ENCODE measurements at regions of chr17 and their contacts with region 1.

Region 1: GRCh38 chr17:29740017-29740416 is 117.3 kb upstream of the CORO6 start:
- DNase-seq: no peak
- ATAC-seq: no peak
- H3K4me3 ChIP-seq: no peak overlapping the region
- H3K27ac ChIP-seq: no peak overlapping the region
- H3K4me1 ChIP-seq: peaks cover 0 to 4% of the 10 kb centered on the region in 2 experiments; a peak in 1 of 4 replicates
- H3K27me3 ChIP-seq: no peaks in the 10 kb centered on the region
- CTCF ChIP-seq: no peak
- POLR2A ChIP-seq: no peak
- RAD21 ChIP-seq: no peak

Region 2: DNA sequence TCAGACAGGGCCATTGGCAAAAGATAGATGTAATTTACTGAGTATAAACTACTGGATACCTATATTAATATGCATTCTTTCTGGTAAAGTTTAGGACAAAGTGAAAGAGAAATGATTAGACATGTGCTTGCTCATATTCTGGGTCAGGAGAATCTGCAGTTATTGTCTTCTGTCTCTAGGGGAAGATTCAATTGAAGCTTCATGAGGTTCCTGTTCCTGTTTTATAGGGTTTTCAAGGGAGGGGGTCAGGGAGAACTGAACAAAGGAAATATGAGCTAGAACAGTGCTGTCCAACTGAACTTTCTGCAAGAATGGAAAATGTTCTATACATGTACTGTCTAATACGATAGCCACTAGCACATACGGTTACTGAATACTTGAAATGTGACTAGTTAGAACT is 58.0 kb before region 1 on chr17:
- CTCF ChIA-PET with region 1: no interaction called
- POLR2A ChIA-PET with region 1: no interaction called
- RAD21 ChIA-PET with region 1: no interaction called
- intact Hi-C with region 1: loop called (anchors 10 kb)
- DNase-seq: no peak
- ATAC-seq: 0 out of 2 replicates have a peak, but pooled peaks have one; percentile 42
- H3K4me3 ChIP-seq: no peak overlapping the region
- H3K27ac ChIP-seq: no peak overlapping the region
- H3K4me1 ChIP-seq: peaks cover 11 to 29% of the 10 kb centered on the region in 2 experiments; a peak in 3 of 4 replicates
- H3K27me3 ChIP-seq: no peaks in the 10 kb centered on the region
- CTCF ChIP-seq: peak in 1 of 3 experiments; percentile 13; a peak in 1 of 6 replicates
- POLR2A ChIP-seq: no peak
- RAD21 ChIP-seq: no peak

Region 3: GRCh38 chr17:29722411-29723198 is 17.4 kb before region 1 on chr17:
- CTCF ChIA-PET with region 1: no interaction called
- POLR2A ChIA-PET with region 1: no interaction called
- RAD21 ChIA-PET with region 1: no interaction called
- intact Hi-C with region 1: no loop called
- DNase-seq: no peak
- ATAC-seq: no peak
- H3K4me3 ChIP-seq: no peak overlapping the region
- H3K27ac ChIP-seq: no peak overlapping the region
- H3K4me1 ChIP-seq: peaks cover 7 to 28% of the 10 kb centered on the region in 2 experiments; a peak in 3 of 4 replicates
- H3K27me3 ChIP-seq: no peaks in the 10 kb centered on the region
- CTCF ChIP-seq: no peak
- POLR2A ChIP-seq: no peak
- RAD21 ChIP-seq: no peak

Region 4: DNA sequence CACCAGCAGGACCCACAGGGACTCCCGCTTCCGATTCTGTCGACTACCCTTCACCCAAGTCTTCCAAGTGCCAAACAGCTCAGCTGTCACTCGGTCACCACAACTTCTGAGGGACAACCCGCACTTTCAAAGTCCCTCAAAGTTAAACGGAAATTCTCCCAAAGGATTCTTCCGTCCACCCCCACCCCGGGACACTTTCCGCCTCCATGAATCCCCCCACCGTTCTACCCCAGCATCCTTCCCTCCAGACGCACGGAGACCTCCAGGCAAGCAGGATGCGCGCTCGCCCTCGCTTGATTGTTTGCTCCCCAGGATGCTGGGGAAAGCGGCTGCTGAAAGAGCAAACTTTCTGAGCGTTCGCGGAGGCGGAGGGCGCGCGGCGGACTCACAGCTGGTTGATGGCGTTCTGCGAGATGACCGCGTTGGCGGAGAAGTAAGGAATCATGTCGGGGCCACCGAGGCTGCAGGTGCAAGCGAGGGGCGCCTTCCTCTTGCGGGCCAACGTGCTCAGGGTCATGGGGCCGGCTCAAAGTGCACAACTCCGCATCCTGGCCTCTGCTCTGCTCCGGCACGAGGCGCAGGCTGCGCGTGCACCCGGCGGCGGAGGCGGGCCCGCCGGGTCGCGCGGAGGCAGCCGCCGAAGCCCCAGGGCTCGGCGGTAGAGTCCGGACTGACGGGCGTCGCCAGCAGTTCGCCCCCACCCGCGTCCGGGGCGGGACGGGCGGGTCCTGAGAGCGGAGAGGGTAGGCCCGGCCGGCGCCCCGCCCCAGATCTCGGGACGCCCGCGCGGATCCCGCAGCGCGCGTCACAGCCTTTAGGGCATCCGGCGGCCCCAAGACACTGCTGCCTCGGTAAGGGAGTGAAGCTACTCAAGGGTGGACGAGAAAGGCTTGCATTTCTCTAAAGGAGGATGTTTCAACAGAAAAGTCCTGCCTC is 21.0 kb after region 1 on chr17:
- CTCF ChIA-PET with region 1: no interaction called
- POLR2A ChIA-PET with region 1: no interaction called
- RAD21 ChIA-PET with region 1: no interaction called
- intact Hi-C with region 1: no loop called
- DNase-seq: no peak
- ATAC-seq: no peak
- H3K4me3 ChIP-seq: no peak overlapping the region
- H3K27ac ChIP-seq: no peak overlapping the region
- H3K4me1 ChIP-seq: no peaks in the 10 kb centered on the region
- H3K27me3 ChIP-seq: no peaks in the 10 kb centered on the region
- CTCF ChIP-seq: no peak
- POLR2A ChIP-seq: no peak
- RAD21 ChIP-seq: no peak

Measured in HCT116 (cell line).